ENCODE measurements at regions of chr6 and their contacts with region 1.

Region 1: GRCh38 chr6:125749173-125749864 is at the start of gene HEY2:
- DNase-seq: no peak
- H3K4me3 ChIP-seq: peak within 1 kb of the TSS; percentile 61
- CTCF ChIP-seq: peak; percentile 9

Region 2: GRCh38 chr6:125764121-125764671 is 14.9 kb after region 1 on chr6:
- CTCF ChIA-PET with region 1: interaction called, 14 read pairs
- POLR2A ChIA-PET with region 1: no interaction called
- DNase-seq: no peak
- H3K4me3 ChIP-seq: no peak overlapping the region
- CTCF ChIP-seq: no peak

Region 3: DNA sequence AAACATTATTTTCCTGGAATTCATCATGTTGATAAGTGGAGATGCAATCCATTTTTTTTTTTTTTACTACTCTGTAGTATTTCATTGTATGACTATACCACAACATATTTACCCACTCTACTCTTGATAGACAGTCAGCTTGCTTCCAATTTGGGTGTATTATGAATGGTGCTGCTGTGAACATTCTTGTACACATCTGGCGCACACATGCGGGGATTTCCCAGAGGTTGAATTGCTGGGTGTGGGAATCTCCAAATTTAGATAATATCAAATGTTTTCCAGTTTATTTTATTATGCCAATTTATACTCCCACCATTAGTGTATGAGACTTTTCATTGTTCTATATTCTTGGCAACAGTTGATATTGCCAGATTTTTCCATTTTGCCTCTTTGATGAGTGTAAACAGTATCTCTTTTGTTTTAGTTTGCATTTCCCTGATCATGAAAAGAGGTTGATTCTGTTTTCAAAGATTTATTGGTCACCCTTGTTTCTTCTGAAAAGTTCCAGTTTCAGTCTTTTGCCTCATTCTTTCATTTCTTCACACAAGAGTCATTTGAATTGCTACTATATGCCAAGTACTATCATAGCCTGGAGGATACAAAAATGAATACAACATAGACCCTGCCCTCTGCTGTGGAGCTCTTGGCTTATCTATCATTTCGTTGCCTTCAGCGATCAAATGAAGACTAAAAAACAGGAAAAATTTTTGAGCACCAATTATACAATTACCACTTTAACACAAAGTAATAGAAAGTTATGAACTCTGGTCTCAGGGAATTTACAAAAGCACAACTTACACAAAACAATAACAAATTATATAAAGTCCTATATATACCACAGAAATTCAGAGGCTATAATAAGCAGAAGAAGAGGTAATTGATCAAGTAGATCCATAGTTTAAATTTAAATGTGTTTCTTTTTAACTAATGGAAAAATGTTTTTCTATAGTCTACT is 24.3 kb after region 1 on chr6:
- CTCF ChIA-PET with region 1: interaction called, 10 read pairs
- POLR2A ChIA-PET with region 1: no interaction called
- DNase-seq: no peak
- H3K4me3 ChIP-seq: no peak overlapping the region
- CTCF ChIP-seq: no peak